Right ventricle myocardium superior (tissue), 1 donor: ENCODE measurements at regions of chr2 and their contacts with region 1.

Region 1: DNA sequence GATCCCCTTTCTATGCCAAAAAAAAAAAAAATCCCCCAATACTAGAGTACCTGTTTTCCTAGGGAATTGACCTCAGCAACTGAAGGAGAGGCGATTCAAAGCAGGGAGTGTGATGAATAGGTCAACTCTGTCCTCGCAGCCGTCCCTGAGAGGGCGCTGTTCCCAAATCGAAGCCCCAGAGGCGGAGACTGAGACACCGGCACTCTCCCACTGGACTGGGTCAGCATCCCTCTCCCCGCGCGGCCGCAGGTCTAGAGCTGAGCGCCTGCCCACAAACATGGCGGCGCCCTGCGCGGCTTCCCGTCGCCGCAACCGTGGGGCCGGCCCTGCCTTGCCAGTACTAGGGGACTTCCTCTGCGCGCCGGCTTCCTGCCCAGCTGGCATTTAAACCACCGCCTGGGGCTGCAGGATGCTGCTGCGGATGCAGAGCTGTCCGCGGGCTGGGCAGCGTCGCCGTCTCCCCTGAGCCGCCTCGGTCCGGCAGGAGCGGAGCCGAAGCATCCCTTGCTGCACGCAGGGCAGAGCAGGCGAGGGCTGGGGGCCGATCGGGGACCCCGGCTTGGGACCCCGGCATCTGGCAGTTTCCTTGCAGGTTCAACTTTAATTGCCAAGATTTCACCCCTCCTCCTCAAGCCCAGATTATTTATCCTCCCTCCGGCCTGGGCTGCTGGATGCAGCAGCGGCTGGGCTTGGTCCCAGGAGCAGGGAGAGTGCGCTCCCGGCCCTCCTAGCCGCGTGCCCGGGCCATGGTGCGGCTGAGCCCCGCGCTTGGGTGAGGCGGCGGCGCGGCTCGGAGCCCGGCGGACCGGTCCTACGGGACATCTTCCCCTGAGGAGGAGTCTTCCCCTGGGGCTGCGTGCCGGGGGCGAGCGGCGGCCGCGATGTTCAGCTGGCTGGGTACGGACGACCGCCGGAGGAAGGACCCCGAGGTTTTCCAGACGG is at the start of gene EHD3:
- DNase-seq: peak; percentile 93
- ATAC-seq: peak; percentile 94
- total RNA-seq, gene EHD3: 23.0 TPM

Region 2: GRCh38 chr2:31319406-31320175 is 85.6 kb after region 1 on chr2:
- intact Hi-C with region 1: loop called (anchors 10 kb)
- DNase-seq: peak; percentile 58
- ATAC-seq: peak; percentile 75